Motor neuron (in vitro differentiated cells): ENCODE measurements at regions of chr1 and their contacts with region 1.

Region 1: DNA sequence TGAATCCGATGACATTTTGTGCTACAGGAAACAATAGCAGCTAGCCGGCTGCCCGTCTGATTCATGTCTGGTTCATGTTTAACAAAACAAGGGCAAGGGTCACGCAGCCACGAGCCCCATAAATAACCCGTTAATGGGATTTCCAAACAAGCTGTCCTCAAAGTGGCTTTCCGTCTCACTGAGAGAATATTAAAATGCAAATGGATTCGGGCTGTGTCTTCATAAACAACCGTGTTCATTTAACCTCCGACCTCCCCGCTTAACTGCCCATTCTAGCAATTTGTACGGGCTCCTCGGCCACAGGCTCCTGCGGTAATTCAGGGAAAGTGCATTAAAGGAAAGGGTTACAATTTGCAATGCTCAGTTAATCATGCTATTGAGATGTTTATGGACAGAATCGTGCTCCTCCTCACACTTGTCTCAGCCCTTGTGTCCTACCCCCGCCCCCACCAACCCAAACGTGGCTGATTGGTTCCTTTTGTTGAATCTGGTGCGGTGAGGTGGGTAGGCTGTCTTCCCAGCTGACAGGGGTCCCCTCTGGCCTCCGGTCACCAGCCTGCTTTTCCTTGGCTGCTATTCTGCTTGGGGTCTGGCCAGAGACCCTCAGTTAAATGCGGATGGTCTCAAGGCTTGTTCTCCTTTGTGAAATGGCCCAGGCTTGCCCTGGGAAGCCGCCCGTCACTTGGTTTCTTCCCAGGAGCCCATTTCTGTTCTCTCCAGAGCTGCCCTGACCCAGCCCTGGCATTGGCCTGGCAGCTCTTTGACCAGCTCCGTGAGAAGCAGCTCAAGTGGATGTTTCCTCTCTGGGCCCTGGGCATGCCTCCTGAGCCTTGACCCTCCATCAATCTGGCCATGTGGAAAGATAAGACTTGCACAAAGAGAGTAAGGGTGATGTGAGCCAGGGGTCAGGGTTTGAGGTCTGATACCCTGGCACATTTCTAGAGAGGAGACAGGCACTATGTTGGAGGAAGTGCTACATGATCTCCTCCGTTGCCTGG is 200.7 kb upstream of the POU3F1 start:
- ATAC-seq: peak; percentile 50 to 84 (median 82)
- H3K4me3 ChIP-seq: no peak overlapping the region
- H3K27ac ChIP-seq: peak overlapping the region in 1 of 2 donors; percentile 1
- H3K4me1 ChIP-seq: peaks cover 49 to 57% of the 10 kb centered on the region in 2 donors

Region 2: DNA sequence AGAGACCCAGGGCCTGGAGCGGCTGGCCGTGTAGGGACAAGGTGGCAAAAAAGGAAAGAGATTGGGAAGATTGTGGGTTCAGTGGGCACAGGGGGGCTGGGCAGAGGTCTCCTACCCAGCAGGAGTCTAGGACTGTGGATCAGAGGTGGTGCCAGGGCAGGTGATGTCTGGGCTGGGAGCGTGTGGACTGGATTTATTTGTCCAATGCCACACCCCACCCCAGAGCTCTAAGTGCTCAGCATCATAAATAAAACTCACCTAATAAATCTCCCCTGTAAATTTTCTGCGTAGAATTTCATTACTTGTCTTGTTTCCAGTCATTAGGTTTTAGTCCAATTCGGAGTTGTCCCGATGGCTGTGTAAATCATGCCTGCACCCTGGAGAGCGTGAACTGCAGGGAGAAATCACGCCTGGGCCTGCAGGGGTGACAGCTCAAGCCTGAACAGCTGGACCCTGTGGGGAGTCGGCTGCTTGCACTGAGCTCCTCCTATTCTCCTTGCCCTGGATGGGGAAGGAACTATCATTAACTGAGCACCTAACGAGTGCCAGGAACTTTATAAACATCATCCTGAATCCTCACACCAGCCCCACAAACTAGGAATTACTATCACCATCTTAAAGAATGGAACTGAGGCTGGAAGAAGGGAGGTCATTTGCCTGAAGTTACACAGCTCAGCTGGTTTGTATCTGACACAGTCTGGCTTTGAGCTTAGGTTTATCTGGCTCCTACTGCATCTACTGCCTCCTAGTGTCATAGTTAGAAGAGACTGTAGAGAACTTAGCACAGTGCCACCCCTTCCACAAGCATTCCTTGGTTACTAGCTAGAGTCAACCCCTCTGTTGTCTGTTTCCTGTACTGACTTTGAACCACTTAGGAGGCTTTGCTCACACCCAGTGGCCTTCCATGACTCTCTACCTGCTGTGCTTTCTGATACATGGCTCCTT is 175.7 kb before region 1 on chr1:
- in situ Hi-C with region 1: loop called in 1 of 9 experiments (anchors 25 kb)
- ATAC-seq: peak; percentile 16 to 80 (median 48)
- H3K4me3 ChIP-seq: no peak overlapping the region
- H3K27ac ChIP-seq: no peak overlapping the region
- H3K4me1 ChIP-seq: peaks cover 43 to 45% of the 10 kb centered on the region in 2 donors

Region 3: DNA sequence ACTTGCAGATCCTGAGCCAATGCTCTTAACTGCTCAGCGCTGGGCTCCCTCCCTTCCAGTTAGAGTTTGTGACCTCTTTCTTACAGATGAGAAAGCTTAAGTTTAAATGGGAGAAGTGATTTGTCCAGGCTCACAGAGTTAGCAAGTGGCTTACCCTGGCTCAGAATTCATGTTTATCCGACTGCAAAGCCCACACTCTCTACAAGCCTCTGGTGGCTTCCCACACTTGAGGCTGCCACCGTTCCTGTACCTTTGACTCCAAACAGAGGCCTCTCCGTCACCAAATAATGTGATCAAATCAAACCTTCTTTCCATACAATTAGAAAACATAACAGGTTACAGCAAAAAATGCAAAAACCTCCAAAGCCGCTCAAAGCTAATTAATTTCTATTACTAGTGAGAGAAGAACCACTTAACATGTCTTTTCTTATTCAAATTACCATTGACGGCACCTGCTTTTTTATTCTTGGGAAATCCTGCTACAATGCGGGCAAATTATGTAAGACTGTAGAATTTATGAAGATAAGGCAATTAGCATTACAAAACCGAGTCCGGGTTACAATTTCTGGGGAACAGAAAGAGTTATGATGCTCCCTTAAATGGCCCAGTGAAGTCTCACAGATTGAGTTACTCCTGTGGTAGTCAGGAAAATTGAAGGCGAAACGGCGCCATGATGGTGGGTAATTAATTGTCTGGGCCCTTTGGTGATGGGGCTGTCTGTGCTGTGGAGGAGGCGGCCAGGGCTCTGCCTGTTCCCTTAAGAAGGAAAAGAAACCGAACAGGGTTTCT is 123.7 kb after region 1 on chr1:
- in situ Hi-C with region 1: no loop called
- ATAC-seq: peak in 5 of 8 experiments; percentile 18 to 87 (median 83)
- H3K4me3 ChIP-seq: no peak overlapping the region
- H3K27ac ChIP-seq: peak overlapping the region in 1 of 2 donors; percentile 43
- H3K4me1 ChIP-seq: peaks cover 4 to 15% of the 10 kb centered on the region in 2 donors